ENCODE measurements at regions of chr3 and their contacts with region 1.

Region 1: GRCh38 chr3:138118612-138119422 is 3.4 kb upstream of the DZIP1L start:
- DNase-seq: peak; percentile 94
- H3K4me3 Mint-ChIP-seq: no peak overlapping the region
- H3K27ac Mint-ChIP-seq: no peak overlapping the region
- H3K4me1 Mint-ChIP-seq: peaks cover 32% of the 10 kb centered on the region
- H3K27me3 Mint-ChIP-seq: no peaks in the 10 kb centered on the region
- CTCF ChIP-seq: peak; percentile 91

Region 2: DNA sequence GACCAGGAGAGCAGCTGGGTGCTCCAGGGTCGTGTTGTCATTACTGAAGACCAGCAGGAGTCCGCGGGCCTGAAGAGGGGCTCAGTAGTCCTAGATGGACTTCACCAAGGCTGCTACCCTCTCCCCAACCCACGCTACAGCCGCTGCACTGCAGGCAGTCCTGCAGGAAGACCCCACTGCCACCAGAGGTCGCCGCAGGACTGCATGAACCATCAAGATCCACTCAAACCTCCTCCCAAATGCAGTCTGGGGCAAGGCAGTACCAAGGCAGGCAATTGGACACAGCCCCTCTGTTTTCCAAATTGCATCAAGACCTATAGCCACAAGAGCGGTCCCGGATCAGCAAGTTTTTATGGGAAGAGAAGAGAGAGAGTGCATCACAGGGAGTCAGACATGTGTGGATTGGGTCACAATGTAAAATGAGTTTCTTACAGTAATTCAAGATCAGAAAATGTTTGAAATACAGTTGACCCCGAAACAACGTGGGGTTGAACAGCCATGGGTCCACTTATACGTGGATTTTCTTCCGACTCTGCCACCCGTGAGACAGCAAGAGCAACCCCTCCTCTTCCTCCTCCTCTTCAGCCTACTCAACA is 50.1 kb before region 1 on chr3:
- CTCF ChIA-PET with region 1: interaction called, 20 read pairs
- intact Hi-C with region 1: loop called (anchors 1 kb)
- DNase-seq: peak; percentile 90
- H3K4me3 Mint-ChIP-seq: no peak overlapping the region
- H3K27ac Mint-ChIP-seq: no peak overlapping the region
- H3K4me1 Mint-ChIP-seq: no peaks in the 10 kb centered on the region
- H3K27me3 Mint-ChIP-seq: no peaks in the 10 kb centered on the region
- CTCF ChIP-seq: peak; percentile 98

Region 3: DNA sequence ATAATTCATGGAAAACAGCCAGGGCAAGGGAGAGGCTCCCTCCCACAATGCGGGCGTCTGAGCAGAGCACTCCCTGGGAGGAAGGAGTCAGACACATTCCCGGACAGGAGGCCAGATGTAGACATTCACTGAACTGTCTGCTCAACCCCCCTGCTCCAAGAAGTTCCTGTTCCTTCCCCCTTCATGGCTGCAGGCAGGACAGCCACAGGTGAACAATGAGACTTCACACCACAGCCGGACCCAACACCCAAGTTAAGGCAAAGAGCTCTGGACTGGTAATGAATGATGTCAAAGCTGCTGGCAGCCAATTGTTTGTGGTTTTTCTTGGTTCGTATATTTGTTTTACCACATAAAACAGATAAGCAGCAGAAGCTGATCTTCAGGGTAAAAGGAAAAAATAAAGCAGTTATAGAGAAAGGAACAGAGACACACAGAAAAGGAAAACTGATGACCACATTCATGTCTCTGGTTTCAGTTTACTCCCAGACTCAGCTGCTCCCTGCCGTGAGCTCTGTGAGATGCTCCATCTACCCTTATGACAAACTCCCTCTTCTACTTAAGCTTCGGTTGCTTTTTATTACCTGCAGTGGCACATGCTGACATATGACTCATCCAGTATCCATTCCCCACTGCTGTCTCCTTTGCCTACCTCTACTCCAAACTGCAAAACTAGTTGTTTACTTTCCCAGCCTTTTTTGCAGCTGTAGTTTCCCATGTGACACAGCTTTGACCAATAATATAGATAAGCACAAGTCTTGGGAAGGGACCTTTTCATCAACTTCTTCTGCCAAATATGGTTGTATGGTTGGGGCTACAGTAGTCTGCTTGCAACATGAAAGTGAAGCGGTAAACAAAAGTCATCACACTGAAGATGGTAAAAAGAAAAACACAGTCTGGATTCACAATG is 36.5 kb before region 1 on chr3:
- CTCF ChIA-PET with region 1: interaction called, 20 read pairs
- intact Hi-C with region 1: loop called (anchors 5 kb)
- DNase-seq: peak; percentile 69
- H3K4me3 Mint-ChIP-seq: peak overlapping the region; percentile 12
- H3K27ac Mint-ChIP-seq: peak overlapping the region; percentile 50
- H3K4me1 Mint-ChIP-seq: peaks cover 24% of the 10 kb centered on the region
- H3K27me3 Mint-ChIP-seq: no peaks in the 10 kb centered on the region
- CTCF ChIP-seq: no peak

Region 4: DNA sequence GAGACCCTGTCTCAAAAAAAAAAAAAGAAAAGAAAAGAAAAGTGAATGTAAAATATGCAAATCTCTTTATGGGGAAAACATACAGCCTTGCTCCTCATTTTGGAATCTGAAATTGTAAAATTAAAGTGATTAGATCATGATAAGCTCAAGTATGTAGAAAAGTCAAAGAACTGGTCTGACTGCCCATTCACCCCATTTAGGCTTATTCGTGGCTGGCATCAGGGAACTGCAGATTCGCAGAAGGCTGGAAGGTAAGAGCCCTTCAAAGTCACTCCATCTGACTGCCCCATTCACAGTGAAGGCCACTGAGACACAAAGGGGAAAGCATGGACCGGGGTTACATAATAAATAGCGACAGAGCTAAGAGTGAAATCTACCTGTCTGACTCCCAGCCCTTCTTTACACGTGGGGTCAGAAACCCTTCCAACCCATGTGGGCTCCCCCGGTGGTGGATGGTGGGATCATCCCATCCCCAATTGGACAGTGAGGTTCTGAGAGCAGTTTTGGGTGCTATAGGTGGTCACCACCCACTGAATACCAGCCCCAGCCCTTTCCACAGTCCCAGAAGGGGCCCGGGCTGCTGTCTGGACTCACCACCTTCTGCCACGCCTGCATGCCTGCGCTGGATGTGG is 21.5 kb before region 1 on chr3:
- CTCF ChIA-PET with region 1: interaction called, 4 read pairs
- intact Hi-C with region 1: loop called (anchors 2 kb)
- DNase-seq: peak; percentile 71
- H3K4me3 Mint-ChIP-seq: peak overlapping the region; percentile 22
- H3K27ac Mint-ChIP-seq: no peak overlapping the region
- H3K4me1 Mint-ChIP-seq: peaks cover 24% of the 10 kb centered on the region
- H3K27me3 Mint-ChIP-seq: no peaks in the 10 kb centered on the region
- CTCF ChIP-seq: peak; percentile 76

Region 5: DNA sequence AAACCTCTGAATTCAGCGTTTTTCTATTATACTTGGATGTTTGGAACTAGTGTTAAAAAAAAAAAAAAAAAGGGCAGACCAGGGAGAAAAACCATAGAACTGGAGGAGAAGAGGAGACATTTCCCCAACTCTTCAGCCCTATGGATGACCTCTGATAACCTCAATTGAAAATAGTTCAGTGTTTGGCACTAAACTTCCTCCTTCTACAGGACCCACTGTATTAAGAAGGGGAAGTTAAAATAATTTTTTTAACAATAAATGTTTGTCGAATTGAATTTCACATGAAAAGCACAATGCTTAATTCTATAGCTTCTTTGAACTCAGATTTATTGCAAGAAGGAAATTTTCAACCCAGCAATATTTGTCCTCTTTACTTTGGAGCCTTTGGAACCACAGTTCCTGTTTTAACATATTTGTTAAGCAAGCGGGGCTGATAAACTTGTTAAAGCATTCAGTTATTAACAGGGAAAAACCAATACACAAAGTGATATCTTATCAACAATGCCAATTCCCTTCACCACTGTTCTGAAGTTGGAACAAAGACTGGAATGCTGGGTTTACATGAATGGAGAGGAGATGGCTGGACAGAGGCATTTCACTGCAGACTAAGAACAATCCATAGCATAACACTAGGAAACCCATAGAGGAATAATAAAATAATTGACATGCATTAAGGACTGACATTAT is 16.5 kb after region 1 on chr3:
- CTCF ChIA-PET with region 1: no interaction called
- intact Hi-C with region 1: no loop called
- DNase-seq: no peak
- H3K4me3 Mint-ChIP-seq: no peak overlapping the region
- H3K27ac Mint-ChIP-seq: no peak overlapping the region
- H3K4me1 Mint-ChIP-seq: no peaks in the 10 kb centered on the region
- H3K27me3 Mint-ChIP-seq: no peaks in the 10 kb centered on the region
- CTCF ChIP-seq: no peak